ENCODE measurements at regions of chr1 and their contacts with region 1.

Region 1: GRCh38 chr1:6359216-6360116 is 34.1 kb downstream of the ACOT7 start:
- DNase-seq: peak; percentile 67
- ATAC-seq: peak; percentile 81
- H3K4me3 ChIP-seq: peak overlapping the region in 3 of 5 experiments; percentile 20 to 31 (median 25)
- H3K4me3 Mint-ChIP-seq: peak overlapping the region; percentile 55
- H3K27ac ChIP-seq: peak overlapping the region; percentile 34 to 35
- H3K27ac Mint-ChIP-seq: peak overlapping the region; percentile 61
- H3K4me1 ChIP-seq: peaks cover 21 to 30% of the 10 kb centered on the region in 2 donors
- H3K4me1 Mint-ChIP-seq: peaks cover 20% of the 10 kb centered on the region
- H3K27me3 ChIP-seq: no peaks in the 10 kb centered on the region
- H3K27me3 Mint-ChIP-seq: no peaks in the 10 kb centered on the region
- CTCF ChIP-seq: no peak

Region 2: DNA sequence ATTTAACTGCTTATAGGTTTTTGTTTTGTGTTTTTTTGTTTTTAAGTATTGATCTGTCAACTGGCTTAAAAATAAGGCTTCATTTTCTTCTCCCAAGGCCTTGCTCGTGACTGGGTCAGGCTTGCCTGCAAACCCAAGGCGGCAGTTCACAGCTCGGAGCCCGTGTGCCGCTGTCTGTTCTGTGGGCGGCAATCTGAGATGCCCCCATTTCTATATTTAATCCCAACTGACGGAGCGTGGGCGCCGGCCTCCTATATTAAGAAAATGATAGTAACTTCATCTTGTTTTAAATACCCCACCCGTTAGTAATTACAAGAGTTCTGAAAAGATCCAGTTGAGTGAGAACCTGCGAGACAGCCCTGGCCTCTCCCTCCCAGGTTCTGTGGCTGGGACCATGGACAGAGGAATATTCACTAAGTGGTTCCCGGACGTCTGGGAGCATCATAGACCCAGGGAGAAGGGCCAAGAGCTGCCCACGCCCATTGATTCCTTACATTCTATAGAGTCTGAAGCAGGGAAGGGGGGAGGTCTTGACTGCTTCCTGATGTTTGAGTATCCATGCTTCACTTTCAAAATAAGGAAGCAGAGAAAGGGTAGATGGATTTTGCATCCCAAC is 56.0 kb before region 1 on chr1:
- CTCF ChIA-PET with region 1: no interaction called
- POLR2A ChIA-PET with region 1: no interaction called
- intact Hi-C with region 1: no loop called
- DNase-seq: no peak
- ATAC-seq: no peak
- H3K4me3 ChIP-seq: no peak overlapping the region
- H3K4me3 Mint-ChIP-seq: no peak overlapping the region
- H3K27ac ChIP-seq: no peak overlapping the region
- H3K27ac Mint-ChIP-seq: no peak overlapping the region
- H3K4me1 ChIP-seq: no peaks in the 10 kb centered on the region
- H3K4me1 Mint-ChIP-seq: no peaks in the 10 kb centered on the region
- H3K27me3 ChIP-seq: no peaks in the 10 kb centered on the region
- H3K27me3 Mint-ChIP-seq: no peaks in the 10 kb centered on the region
- CTCF ChIP-seq: no peak

Region 3: DNA sequence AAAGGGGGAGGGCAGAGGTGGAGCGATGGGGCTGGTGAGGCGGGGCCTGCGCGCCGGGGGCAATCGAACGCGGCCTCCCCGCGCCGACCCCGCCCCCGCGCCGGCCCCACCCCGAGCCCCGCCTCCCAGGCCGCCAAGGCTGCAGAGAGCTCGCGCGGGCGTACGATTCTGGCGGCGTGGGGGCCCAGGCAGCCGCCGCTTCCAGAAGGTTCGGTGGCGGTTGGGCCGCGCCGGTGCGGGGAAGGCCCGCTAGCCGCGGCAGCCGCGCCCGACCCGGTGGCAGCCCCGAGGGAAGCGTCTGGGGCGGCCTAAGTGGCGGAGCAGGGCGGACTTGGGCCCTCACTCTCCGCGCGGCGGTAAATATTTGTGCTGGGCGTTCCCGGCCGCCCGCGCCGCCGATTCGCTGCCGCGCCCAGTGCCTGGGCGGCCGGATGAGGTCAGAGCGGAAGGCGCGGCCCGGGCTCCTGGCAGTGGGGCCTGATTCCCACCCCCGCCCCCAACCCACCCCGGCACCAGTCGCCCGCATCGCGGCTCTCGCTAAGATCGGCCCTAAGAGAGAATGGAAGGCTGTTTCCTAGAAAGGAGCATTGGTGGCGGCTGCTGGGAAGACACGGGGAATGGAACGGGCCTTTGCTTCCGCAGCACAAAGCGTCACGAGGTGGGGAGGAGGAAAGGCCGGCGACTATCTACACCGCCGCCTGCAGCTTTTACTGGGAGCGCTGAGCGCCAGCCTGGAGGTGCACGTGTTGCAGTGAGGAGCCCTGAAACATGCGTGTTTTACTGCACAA is 34.1 kb after region 1 on chr1 and contains the start of gene ACOT7:
- CTCF ChIA-PET with region 1: interaction called, 12 read pairs
- POLR2A ChIA-PET with region 1: no interaction called
- intact Hi-C with region 1: loop called (anchors 5 kb)
- DNase-seq: peak; percentile 94
- ATAC-seq: peak; percentile 90
- H3K4me3 ChIP-seq: peak within 1 kb of the TSS; percentile 51 to 80 (median 64)
- H3K4me3 Mint-ChIP-seq: peak within 1 kb of the TSS; percentile 92
- H3K27ac ChIP-seq: peak within 1 kb of the TSS; percentile 84
- H3K27ac Mint-ChIP-seq: peak within 1 kb of the TSS; percentile 97
- H3K4me1 ChIP-seq: peaks cover 15 to 20% of the 10 kb centered on the region in 2 donors
- H3K4me1 Mint-ChIP-seq: peaks cover 16% of the 10 kb centered on the region
- H3K27me3 ChIP-seq: peaks cover 0 to 15% (median 0%) of the 10 kb centered on the region in 4 experiments
- H3K27me3 Mint-ChIP-seq: no peaks in the 10 kb centered on the region
- CTCF ChIP-seq: no peak
- total RNA-seq, gene ACOT7: 4.0 and 4.2 TPM in 2 replicates

Region 4: GRCh38 chr1:6401673-6402072 is 42.2 kb after region 1 on chr1:
- CTCF ChIA-PET with region 1: interaction called, 89 read pairs
- POLR2A ChIA-PET with region 1: no interaction called
- intact Hi-C with region 1: no loop called
- DNase-seq: no peak
- ATAC-seq: no peak
- H3K4me3 ChIP-seq: no peak overlapping the region
- H3K4me3 Mint-ChIP-seq: no peak overlapping the region
- H3K27ac ChIP-seq: no peak overlapping the region
- H3K27ac Mint-ChIP-seq: no peak overlapping the region
- H3K4me1 ChIP-seq: no peaks in the 10 kb centered on the region
- H3K4me1 Mint-ChIP-seq: no peaks in the 10 kb centered on the region
- H3K27me3 ChIP-seq: peaks cover 0 to 3% (median 0%) of the 10 kb centered on the region in 4 experiments
- H3K27me3 Mint-ChIP-seq: peaks cover 14% of the 10 kb centered on the region
- CTCF ChIP-seq: no peak

Region 5: DNA sequence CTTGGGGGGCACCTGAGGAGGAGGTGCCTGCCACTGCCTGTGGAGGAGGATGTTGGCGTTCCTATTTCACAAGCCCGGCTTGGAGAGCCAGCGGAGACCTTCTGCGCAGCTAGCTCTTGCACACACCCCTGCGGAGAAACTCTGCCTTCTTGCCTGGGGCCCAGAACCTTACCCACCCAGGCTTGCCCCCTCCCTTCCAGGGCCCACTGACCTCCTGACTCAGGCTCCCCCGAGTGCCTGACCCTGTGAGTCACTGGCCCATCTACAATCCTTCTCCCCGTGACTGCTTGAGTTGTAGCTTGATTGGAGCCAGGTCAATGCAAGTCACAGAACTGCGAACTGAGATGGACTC is 56.8 kb after region 1 on chr1:
- CTCF ChIA-PET with region 1: no interaction called
- POLR2A ChIA-PET with region 1: no interaction called
- intact Hi-C with region 1: no loop called
- DNase-seq: no peak
- ATAC-seq: no peak
- H3K4me3 ChIP-seq: no peak overlapping the region
- H3K4me3 Mint-ChIP-seq: no peak overlapping the region
- H3K27ac ChIP-seq: no peak overlapping the region
- H3K27ac Mint-ChIP-seq: no peak overlapping the region
- H3K4me1 ChIP-seq: peaks cover 12 to 22% of the 10 kb centered on the region in 2 donors
- H3K4me1 Mint-ChIP-seq: peaks cover 6% of the 10 kb centered on the region
- H3K27me3 ChIP-seq: peaks cover 0 to 56% (median 23%) of the 10 kb centered on the region in 4 experiments
- H3K27me3 Mint-ChIP-seq: peaks cover 47% of the 10 kb centered on the region
- CTCF ChIP-seq: no peak

Region 6: GRCh38 chr1:6438047-6438525 is 78.6 kb after region 1 on chr1:
- CTCF ChIA-PET with region 1: interaction called, 12 read pairs
- POLR2A ChIA-PET with region 1: no interaction called
- intact Hi-C with region 1: no loop called
- DNase-seq: peak; percentile 80
- ATAC-seq: peak; percentile 77
- H3K4me3 ChIP-seq: no peak overlapping the region
- H3K4me3 Mint-ChIP-seq: peak overlapping the region; percentile 56
- H3K27ac ChIP-seq: no peak overlapping the region
- H3K27ac Mint-ChIP-seq: no peak overlapping the region
- H3K4me1 ChIP-seq: peaks cover 3 to 5% of the 10 kb centered on the region in 2 donors
- H3K4me1 Mint-ChIP-seq: peaks cover 10% of the 10 kb centered on the region
- H3K27me3 ChIP-seq: peaks cover 0 to 29% (median 14%) of the 10 kb centered on the region in 4 experiments
- H3K27me3 Mint-ChIP-seq: peaks cover 32% of the 10 kb centered on the region
- CTCF ChIP-seq: peak; percentile 90

Measured in B cell (primary cell).